ENCODE measurements at regions of chr7 and their contacts with region 1.

Region 1: DNA sequence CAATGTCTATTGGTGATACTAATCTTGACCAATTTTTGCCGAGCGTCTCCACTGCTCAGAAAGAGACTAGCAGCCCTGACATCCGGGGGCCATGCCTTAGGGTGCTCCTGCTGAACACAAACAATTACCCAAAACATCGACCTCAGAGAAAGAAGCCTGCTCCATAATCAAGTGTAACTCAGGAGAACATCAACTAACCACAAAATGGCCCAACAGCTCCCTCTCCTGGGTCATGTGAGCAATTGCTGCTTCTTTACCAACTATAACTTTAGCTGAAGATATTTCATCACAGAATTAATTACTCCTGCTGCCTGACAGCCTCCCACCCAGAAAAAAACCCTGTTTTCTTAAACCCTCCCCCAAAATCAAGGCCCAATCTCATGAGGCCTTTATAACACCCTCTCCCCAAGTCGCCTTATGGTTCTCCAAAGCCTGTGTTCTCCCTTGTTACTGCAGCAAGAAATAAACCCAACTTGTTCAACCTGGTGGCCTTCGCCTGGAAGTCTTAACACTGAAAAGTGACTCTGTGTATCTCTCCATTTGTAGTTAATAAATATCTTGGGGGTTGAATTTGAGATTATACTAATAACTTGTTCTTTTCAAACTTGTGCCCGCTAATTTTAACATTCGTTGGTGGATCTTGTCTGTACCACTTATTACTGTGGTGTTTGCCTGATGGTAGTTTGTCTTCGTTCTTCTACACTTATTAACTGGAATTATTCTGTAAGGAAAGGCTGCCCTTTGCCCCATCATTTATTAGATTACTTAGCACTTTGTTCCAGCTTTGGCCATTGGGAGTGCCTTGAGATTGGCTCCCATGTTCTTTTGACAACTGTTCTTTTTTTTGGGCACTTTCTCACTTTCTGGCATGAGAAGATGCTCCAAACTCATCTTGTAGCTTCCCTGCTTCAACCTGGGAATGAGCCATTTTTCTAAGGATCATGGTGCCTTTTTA is 21.2 kb upstream of the RAMP3 start:
- DNase-seq: peak; percentile 71
- ATAC-seq: peak; percentile 87
- H3K4me3 ChIP-seq: no peak overlapping the region
- H3K27ac ChIP-seq: no peak overlapping the region
- H3K4me1 ChIP-seq: no peaks in the 10 kb centered on the region
- H3K27me3 ChIP-seq: 0 out of 2 replicates have a peak, but pooled peaks cover 2% of the 10 kb centered on the region
- CTCF ChIP-seq: peak; percentile 93

Region 2: GRCh38 chr7:44581879-44582603 is 554.3 kb before region 1 on chr7 and contains the start of gene TMED4:
- CTCF ChIA-PET with region 1: no interaction called
- POLR2A ChIA-PET with region 1: no interaction called
- in situ Hi-C with region 1: no loop called
- intact Hi-C with region 1: loop called (anchors 10 kb)
- DNase-seq: peak; percentile 97
- ATAC-seq: peak; percentile 96
- H3K4me3 ChIP-seq: peak within 1 kb of the TSS; percentile 90 to 97
- H3K27ac ChIP-seq: peak within 1 kb of the TSS; percentile 90
- H3K4me1 ChIP-seq: peaks cover 11% of the 10 kb centered on the region
- H3K27me3 ChIP-seq: no peaks in the 10 kb centered on the region
- CTCF ChIP-seq: no peak
- total RNA-seq, gene TMED4: 123 TPM

Region 3: GRCh38 chr7:44858161-44858560 is 278.2 kb before region 1 on chr7:
- CTCF ChIA-PET with region 1: interaction called, 11 read pairs
- POLR2A ChIA-PET with region 1: no interaction called
- in situ Hi-C with region 1: no loop called
- intact Hi-C with region 1: loop called (anchors 1 kb)
- DNase-seq: no peak
- ATAC-seq: no peak
- H3K4me3 ChIP-seq: no peak overlapping the region
- H3K27ac ChIP-seq: no peak overlapping the region
- H3K4me1 ChIP-seq: no peaks in the 10 kb centered on the region
- H3K27me3 ChIP-seq: no peaks in the 10 kb centered on the region
- CTCF ChIP-seq: no peak

Region 4: DNA sequence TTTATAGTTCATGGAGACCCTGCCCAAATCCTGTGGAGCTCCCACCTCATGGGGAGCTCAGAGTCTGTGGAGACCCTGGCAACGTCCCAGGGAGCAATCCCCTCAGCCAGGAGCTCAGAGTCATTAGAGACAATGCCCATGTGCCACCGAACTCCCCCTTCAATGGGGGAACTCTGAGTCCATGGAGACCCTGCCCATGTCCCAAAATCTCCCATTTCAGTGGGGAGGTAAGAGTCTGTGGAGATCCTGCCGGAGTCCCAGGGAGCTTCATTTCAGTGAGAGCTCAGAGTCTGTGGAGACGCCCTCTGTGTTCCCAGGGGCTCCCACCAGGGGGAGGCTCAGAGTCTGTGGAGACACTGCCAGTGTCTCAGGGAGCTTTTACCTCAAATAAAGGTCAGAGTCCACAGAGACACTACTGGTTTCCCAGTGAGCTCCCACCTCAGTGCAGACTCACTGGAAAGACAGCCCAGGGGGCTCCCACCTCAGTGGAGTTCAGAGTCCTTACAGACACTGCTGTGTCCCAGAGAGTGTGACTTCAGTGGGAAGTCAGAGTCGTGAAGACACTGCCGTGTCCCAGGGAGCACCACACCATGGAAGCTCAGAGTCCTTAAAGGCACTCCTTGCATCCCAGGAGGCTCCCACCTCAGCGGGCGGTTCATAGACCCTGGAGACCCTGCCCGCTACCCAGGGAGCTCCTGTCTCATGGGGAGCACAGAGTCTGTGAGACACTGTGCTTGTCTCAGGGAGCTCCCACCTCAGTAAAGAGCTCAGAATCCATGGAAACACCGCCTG is 162.6 kb before region 1 on chr7:
- CTCF ChIA-PET with region 1: interaction called, 35 read pairs
- POLR2A ChIA-PET with region 1: no interaction called
- in situ Hi-C with region 1: no loop called
- intact Hi-C with region 1: loop called (anchors 5 kb)
- DNase-seq: no peak
- ATAC-seq: peak; percentile 59
- H3K4me3 ChIP-seq: no peak overlapping the region
- H3K27ac ChIP-seq: no peak overlapping the region
- H3K4me1 ChIP-seq: no peaks in the 10 kb centered on the region; the same call in 1 of the 2 replicates
- H3K27me3 ChIP-seq: no peaks in the 10 kb centered on the region
- CTCF ChIP-seq: no peak; the same call in 1 of the 2 replicates

Region 5: GRCh38 chr7:45080265-45080962 is 56.0 kb before region 1 on chr7:
- CTCF ChIA-PET with region 1: interaction called, 6 read pairs
- POLR2A ChIA-PET with region 1: no interaction called
- in situ Hi-C with region 1: no loop called
- intact Hi-C with region 1: loop called (anchors 2 kb)
- DNase-seq: no peak
- ATAC-seq: peak; percentile 45
- H3K4me3 ChIP-seq: no peak overlapping the region
- H3K27ac ChIP-seq: no peak overlapping the region
- H3K4me1 ChIP-seq: no peaks in the 10 kb centered on the region
- H3K27me3 ChIP-seq: no peaks in the 10 kb centered on the region
- CTCF ChIP-seq: no peak

Region 6: DNA sequence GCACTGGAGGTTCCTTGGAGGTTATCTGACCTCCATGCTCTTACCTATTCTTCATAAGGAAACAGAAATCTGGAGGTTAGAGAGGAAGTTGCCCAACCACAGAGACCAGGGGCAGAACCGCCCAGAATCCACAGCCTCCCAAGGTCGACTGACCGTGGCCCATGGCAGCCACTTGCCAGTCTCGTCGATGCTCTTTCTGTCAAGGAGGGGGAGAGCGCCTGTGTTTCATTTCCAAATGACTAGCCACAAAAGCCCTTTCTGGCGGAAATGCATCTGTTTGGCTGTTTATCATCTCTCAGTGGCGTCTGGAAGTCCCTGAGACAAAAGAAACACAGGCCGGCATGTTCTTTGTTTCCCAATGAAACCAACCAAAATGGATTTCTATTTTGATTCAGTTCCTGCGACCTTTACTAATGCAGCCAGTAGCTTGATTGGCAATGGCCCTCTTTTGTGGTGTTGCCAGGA is 24.1 kb after region 1 on chr7:
- CTCF ChIA-PET with region 1: no interaction called
- POLR2A ChIA-PET with region 1: no interaction called
- in situ Hi-C with region 1: no loop called
- intact Hi-C with region 1: no loop called
- DNase-seq: no peak
- ATAC-seq: no peak
- H3K4me3 ChIP-seq: no peak overlapping the region
- H3K27ac ChIP-seq: no peak overlapping the region
- H3K4me1 ChIP-seq: no peaks in the 10 kb centered on the region
- H3K27me3 ChIP-seq: peaks cover 4% of the 10 kb centered on the region; the same call in 1 of the 2 replicates
- CTCF ChIP-seq: no peak

Region 7: DNA sequence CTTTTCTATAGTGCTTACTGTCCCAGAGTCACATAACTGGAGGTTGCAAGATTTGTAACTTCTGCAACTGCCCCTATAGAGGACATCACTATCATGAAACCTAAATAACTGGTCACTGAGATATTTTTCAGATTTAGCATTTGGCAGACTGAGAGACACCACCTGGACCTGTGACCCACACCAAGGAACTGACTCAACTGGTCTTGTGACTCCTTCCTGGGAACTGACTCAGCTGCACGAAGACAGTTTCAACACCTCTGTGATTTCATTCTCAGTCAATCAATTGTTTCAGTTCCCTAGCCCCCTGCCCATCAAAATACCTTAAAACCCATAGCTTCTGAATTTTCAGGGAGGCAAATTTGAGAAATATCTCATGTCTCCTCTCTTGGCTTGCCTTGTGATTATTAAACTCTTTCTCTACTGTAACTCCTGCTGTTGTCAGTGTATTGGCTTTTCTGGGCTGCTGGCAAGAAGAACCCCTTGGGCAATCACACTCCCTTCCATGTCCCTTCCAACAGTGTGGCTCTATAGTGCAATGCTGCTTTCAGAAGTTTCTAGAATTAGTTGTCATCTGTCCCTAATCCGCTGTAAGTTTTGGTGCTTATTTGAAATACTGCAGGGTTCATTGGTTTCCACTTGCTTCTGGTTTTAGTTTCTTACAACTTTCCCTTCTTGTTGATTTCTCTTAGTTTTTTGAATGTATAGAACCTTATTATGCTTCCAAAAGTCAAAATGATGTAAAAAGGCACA is 310.0 kb after region 1 on chr7:
- CTCF ChIA-PET with region 1: no interaction called
- POLR2A ChIA-PET with region 1: no interaction called
- in situ Hi-C with region 1: no loop called
- intact Hi-C with region 1: no loop called
- DNase-seq: no peak
- ATAC-seq: no peak
- H3K4me3 ChIP-seq: no peak overlapping the region
- H3K27ac ChIP-seq: no peak overlapping the region
- H3K4me1 ChIP-seq: no peaks in the 10 kb centered on the region
- H3K27me3 ChIP-seq: no peaks in the 10 kb centered on the region; the same call in 1 of the 2 replicates
- CTCF ChIP-seq: no peak

Measured in Panc1 (cell line).